Activated CD4-positive, alpha-beta T cell treated with anti-CD3 and anti-CD28 coated beads, Interleukin-2, amount 10 ng/mL, durations not matched to agents 7 days and 5 days (primary cell): ENCODE measurements at regions of chr3 and their contacts with region 1.

Region 1: DNA sequence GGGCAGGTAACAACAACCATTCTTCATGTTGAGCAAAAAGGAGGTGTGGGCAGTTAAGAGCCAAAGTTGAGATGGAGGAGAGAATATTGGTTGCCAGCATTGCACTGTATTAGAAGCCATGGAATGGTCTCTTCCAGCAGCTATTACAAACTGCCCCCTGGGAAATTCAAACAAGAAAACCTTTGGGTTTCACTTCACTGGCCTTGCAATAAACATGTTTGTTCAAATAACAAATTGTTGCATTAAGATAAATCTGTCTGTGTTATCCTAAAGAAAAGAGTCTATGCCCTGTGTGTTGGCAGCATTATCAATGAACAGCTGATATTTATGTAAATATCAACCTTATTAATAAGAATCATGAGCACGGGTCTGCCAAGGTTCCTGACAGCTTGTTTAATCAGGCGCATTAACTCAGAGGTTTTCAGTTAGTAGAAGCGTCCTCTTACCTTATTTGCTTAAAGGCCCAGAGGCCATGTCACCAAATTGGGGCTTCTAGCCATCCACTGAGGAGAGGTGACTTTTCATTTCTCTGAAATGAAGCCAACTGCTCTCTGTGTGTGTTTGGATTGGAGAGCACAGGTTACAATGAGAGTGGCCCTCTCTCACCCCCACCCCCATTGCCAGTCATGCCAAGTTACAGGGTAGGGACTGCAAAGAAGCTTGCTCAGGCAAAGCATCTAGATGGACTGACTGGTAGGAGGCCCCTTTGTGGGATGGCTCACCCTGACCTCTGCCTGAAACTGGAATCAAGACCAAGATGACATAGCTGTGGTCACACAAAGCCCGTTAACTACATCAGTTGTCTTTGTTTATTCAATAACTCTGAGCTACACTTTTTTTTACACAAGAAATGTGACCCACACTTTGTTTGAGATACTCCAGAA is 10.5 kb downstream of the FILIP1L start:
- DNase-seq: no peak
- H3K4me3 Mint-ChIP-seq: no peak overlapping the region
- H3K27ac Mint-ChIP-seq: peak overlapping the region; percentile 14
- H3K4me1 Mint-ChIP-seq: peaks cover 36% of the 10 kb centered on the region
- H3K27me3 Mint-ChIP-seq: no peaks in the 10 kb centered on the region

Region 2: GRCh38 chr3:100089812-100090668 is 13.8 kb before region 1 on chr3:
- CTCF ChIA-PET with region 1: interaction called, 25 read pairs
- POLR2A ChIA-PET with region 1: no interaction called
- DNase-seq: peak; percentile 37
- H3K4me3 Mint-ChIP-seq: no peak overlapping the region
- H3K27ac Mint-ChIP-seq: no peak overlapping the region
- H3K4me1 Mint-ChIP-seq: peaks cover 30% of the 10 kb centered on the region
- H3K27me3 Mint-ChIP-seq: peaks cover 6% of the 10 kb centered on the region